ENCODE measurements at regions of chr11 and their contacts with region 1.

Region 1: DNA sequence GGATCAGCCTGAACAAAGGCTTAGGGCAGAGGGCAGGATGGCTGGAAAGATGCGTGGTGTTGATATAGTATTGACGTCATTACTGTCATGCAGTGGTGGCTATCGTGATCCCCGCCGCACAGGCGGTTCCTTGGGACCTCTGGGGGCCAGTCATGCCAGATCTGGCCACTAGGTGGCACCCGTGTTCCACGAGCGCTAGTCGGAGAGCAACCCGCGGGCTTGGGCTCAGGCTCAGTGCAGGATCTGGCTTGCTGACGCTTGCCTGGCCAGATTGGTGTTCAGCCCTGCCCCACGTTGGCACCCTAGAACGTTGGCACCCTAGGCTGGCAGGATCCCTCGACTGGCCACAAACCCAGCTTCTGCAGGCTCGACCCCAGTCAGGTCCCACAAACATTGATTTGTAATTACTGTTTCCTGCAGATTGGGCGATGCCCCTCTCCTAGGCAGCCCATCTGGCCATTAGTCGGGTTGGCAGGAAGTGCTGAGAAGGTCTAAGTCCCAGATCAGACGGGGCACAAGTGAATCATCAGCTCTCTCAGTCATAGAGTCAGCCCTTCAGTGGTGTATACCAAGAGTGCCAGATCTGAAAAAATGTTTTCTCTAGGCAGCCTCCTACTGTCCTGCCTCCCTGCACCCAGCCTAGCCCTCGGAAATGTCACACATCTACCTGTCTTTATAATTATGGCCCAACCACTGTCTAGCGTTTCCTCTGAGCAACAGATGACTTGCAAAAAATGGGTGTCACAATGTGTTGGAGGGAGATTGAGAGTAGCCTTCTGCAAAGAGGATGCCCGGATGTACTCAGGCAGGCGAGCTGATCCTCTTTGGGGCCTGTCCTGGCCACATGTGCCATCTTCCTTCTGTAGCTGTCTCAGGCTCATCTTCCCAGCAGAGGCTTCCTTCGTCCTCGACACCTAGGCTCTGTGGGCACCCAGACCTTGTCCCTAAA is 315.3 kb downstream of the TMEM135 start:
- DNase-seq: peak; percentile 74 to 79
- ATAC-seq: peak; percentile 94 to 99
- H3K4me3 ChIP-seq: no peak overlapping the region
- H3K27ac ChIP-seq: no peak overlapping the region
- H3K4me1 ChIP-seq: no peaks in the 10 kb centered on the region
- CTCF ChIP-seq: peak; percentile 96
- EP300 ChIP-seq: no peak
- POLR2A ChIP-seq: no peak
- RAD21 ChIP-seq: peak; percentile 93 to 96

Region 2: DNA sequence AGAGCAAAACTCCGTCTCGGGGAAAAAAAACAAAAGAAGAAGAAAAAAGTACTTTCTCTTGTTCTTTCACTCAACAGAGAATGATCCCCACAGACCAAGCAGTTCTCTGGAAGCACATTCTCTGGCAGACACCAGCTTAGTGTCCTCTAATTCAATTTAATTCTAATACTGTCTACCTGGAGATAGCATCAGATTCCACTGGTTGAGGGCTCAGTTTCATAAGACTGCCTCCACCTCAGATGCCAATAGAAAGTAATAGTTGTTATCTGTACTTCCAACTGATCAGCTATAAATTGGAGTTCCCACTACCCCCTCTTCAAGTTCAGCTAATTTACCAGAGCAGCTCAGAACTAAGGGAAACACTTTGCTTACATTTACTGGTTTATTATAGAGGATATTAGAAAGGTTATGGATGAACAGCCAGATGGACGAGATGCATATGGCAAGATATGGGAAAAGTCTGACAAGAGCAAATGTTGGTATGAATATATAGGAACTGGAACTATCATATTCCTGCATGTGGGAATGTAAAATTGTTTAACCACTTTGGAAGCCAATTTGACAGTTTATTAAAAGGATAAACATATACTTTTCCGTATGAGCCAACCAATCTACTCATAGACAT is 251.0 kb before region 1 on chr11:
- CTCF ChIA-PET with region 1: no interaction called
- POLR2A ChIA-PET with region 1: no interaction called
- DNase-seq: no peak
- ATAC-seq: no peak
- H3K4me3 ChIP-seq: no peak overlapping the region
- H3K27ac ChIP-seq: no peak overlapping the region
- H3K4me1 ChIP-seq: no peaks in the 10 kb centered on the region
- CTCF ChIP-seq: no peak
- EP300 ChIP-seq: no peak
- POLR2A ChIP-seq: no peak
- RAD21 ChIP-seq: no peak

Region 3: DNA sequence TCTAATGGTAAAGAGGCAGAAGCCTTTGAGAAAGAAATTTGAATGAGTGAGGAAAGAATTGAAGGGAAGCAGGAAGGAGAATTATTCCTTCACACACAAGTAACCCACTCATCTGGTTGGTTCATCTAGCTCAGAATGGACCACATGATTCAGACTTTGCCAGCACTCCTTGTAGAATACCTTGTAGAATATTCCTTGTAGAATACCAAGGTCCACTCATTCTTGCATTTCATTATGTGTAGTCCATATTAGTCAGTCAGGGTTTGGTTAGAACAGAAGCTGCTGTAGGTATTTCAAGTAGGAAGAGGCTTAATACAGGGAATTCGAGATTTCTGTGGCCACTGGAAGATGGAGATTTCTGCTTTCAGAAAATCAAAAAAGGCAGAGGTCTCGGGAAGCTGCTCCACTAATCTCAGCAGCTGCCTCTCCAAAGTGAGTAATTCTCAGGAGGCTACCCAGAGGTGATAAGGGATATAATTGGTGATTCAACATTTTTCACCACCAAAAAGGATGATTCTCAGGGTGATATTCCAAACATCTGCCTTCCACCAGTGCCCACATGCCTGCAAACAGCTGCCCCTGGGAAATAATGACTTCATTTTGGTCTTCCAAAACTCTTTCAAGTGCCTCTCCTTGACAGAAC is 13.9 kb after region 1 on chr11:
- CTCF ChIA-PET with region 1: interaction called, 21 read pairs
- POLR2A ChIA-PET with region 1: no interaction called
- DNase-seq: no peak
- ATAC-seq: no peak
- H3K4me3 ChIP-seq: no peak overlapping the region
- H3K27ac ChIP-seq: no peak overlapping the region
- H3K4me1 ChIP-seq: no peaks in the 10 kb centered on the region
- CTCF ChIP-seq: no peak
- EP300 ChIP-seq: no peak
- POLR2A ChIP-seq: no peak
- RAD21 ChIP-seq: no peak

Measured in A549 (cell line).